ENCODE measurements at regions of chr14 and their contacts with region 1.

Region 1: DNA sequence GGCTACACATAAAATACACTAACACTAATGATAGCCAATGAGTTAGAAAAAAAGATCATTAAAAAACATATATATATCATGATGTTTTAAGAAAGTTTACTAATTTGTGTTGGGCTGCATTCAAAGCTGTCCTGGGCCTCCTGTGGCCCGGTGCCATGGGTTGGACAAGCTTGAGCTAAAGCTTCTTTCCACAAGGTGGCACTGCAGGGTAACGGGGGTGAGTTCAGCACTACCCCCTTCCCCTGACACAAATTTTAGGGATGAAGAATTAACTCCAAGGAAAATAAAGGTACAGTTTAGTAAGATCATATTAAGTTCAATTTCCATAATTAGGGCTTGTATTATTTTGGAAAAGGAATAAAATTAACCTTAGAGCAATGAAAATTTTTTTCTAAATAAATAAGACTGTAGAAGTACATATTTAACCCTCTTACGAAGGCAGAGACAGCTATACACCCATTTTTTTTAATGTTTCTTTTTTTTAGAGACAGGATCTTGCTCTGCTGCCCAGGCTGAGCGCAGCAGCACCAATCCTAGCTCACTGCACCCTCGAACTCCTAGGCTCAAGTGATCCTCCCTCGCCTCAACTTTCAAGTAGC is 38.9 kb downstream of the PPP1R13B start:
- DNase-seq: peak; percentile 20
- H3K4me3 ChIP-seq: no peak overlapping the region
- H3K27ac ChIP-seq: no peak overlapping the region
- H3K27me3 ChIP-seq: peaks cover 2% of the 10 kb centered on the region
- CTCF ChIP-seq: peak; percentile 84

Region 2: DNA sequence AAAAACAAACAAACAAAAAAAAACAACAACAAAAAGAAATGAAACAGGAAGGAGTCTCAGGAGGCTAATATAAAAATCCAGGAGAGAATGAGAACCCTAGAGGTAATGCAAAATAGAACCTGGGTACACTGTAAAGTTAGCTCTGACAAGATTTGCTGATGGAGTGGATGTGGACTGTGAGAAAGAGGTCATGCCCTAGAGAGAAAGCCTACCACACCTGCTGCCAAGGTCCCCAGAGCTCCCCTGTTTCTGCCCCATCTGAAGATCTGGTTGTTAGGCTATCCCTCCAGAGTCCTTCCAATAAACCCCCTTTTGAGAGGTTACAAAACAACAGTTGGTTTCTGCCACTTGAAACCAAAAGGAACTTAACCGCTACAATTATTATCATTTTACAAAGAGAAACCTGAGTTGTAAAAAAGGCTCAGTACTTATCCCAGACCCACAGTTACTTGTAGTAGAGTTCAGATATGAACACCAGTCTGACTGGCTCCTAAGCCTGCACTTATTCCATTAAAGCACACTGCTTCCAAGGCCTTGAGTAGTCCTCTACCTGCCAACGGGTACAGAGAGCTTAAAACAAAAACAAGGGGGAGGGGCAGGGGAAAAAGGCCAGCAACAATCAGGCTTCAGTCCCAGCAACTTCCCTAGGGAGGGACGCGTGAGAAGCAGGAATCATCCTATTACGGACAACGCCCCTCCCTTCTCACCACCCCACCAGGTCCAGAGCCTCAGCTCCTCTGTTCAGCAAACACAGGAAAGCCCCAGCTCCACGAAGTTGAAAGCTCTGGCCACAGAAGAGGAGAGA is 11.2 kb after region 1 on chr14:
- CTCF ChIA-PET with region 1: interaction called, 13 read pairs
- POLR2A ChIA-PET with region 1: no interaction called
- DNase-seq: no peak
- H3K4me3 ChIP-seq: no peak overlapping the region
- H3K27ac ChIP-seq: no peak overlapping the region
- H3K27me3 ChIP-seq: peaks cover 13% of the 10 kb centered on the region
- CTCF ChIP-seq: no peak

Region 3: GRCh38 chr14:103825101-103825500 is 16.6 kb after region 1 on chr14:
- CTCF ChIA-PET with region 1: interaction called, 14 read pairs
- POLR2A ChIA-PET with region 1: interaction called, 3 read pairs
- DNase-seq: no peak
- H3K4me3 ChIP-seq: no peak overlapping the region
- H3K27ac ChIP-seq: no peak overlapping the region
- H3K27me3 ChIP-seq: peaks cover 5% of the 10 kb centered on the region
- CTCF ChIP-seq: no peak

Region 4: GRCh38 chr14:103910262-103910935 is 101.9 kb after region 1 on chr14:
- CTCF ChIA-PET with region 1: interaction called, 21 read pairs
- POLR2A ChIA-PET with region 1: no interaction called
- DNase-seq: peak; percentile 7
- H3K4me3 ChIP-seq: no peak overlapping the region
- H3K27ac ChIP-seq: no peak overlapping the region
- H3K27me3 ChIP-seq: no peaks in the 10 kb centered on the region
- CTCF ChIP-seq: peak; percentile 79

Region 5: GRCh38 chr14:103920981-103921854 is 112.7 kb after region 1 on chr14:
- CTCF ChIA-PET with region 1: interaction called, 14 read pairs
- POLR2A ChIA-PET with region 1: no interaction called
- DNase-seq: peak; percentile 68
- H3K4me3 ChIP-seq: peak overlapping the region; percentile 100
- H3K27ac ChIP-seq: peak overlapping the region; percentile 11
- H3K27me3 ChIP-seq: peaks cover 7% of the 10 kb centered on the region
- CTCF ChIP-seq: peak; percentile 96

Region 6: GRCh38 chr14:103973354-103973753 is 164.9 kb after region 1 on chr14:
- CTCF ChIA-PET with region 1: interaction called, 86 read pairs
- POLR2A ChIA-PET with region 1: no interaction called
- DNase-seq: no peak
- H3K4me3 ChIP-seq: no peak overlapping the region
- H3K27ac ChIP-seq: no peak overlapping the region
- H3K27me3 ChIP-seq: no peaks in the 10 kb centered on the region
- CTCF ChIP-seq: no peak